PC-3 (cell line): ENCODE measurements at regions of chr21 and their contacts with region 1.

Region 1: DNA sequence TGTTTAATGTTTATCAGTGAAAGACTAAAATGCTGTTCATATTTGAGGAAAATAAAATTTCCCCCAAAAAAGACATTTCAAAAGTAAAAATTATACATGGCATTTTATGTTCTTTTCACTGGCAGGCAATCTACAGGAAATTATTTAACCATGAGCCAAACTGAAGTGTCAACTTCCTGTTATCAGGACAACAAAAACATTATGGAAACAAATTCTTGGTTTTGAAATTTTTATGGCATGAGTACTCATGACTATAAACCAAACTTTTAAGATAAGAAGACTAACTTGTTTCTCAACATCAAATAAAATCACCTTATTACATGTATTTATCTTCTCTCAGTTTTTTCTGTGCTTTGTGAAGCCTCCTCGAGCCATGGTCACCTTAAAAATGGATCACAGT is 698.6 kb downstream of the LTN1 start:
- DNase-seq: peak; percentile 88
- ATAC-seq: peak; percentile 79
- H3K4me3 ChIP-seq: no peak overlapping the region
- H3K27ac ChIP-seq: peak overlapping the region; percentile 27
- H3K4me1 ChIP-seq: peaks cover 38% of the 10 kb centered on the region
- H3K27me3 ChIP-seq: no peaks in the 10 kb centered on the region
- CTCF ChIP-seq: no peak

Region 2: GRCh38 chr21:28127175-28127785 is 166.8 kb before region 1 on chr21:
- CTCF ChIA-PET with region 1: no interaction called
- POLR2A ChIA-PET with region 1: no interaction called
- intact Hi-C with region 1: no loop called
- DNase-seq: no peak
- ATAC-seq: no peak
- H3K4me3 ChIP-seq: no peak overlapping the region
- H3K27ac ChIP-seq: no peak overlapping the region
- H3K4me1 ChIP-seq: no peaks in the 10 kb centered on the region
- H3K27me3 ChIP-seq: no peaks in the 10 kb centered on the region
- CTCF ChIP-seq: no peak

Region 3: GRCh38 chr21:28160378-28160777 is 133.7 kb before region 1 on chr21:
- CTCF ChIA-PET with region 1: no interaction called
- POLR2A ChIA-PET with region 1: no interaction called
- intact Hi-C with region 1: no loop called
- DNase-seq: no peak
- ATAC-seq: no peak
- H3K4me3 ChIP-seq: no peak overlapping the region
- H3K27ac ChIP-seq: no peak overlapping the region
- H3K4me1 ChIP-seq: peaks cover 7% of the 10 kb centered on the region; the same call in 1 of the 2 replicates
- H3K27me3 ChIP-seq: no peaks in the 10 kb centered on the region
- CTCF ChIP-seq: no peak

Region 4: GRCh38 chr21:28229814-28230213 is 64.2 kb before region 1 on chr21:
- CTCF ChIA-PET with region 1: no interaction called
- POLR2A ChIA-PET with region 1: no interaction called
- intact Hi-C with region 1: loop called (anchors 5 kb)
- DNase-seq: peak; percentile 92
- ATAC-seq: peak; percentile 85
- H3K4me3 ChIP-seq: no peak overlapping the region
- H3K27ac ChIP-seq: peak overlapping the region; percentile 81
- H3K4me1 ChIP-seq: peaks cover 43% of the 10 kb centered on the region
- H3K27me3 ChIP-seq: no peaks in the 10 kb centered on the region
- CTCF ChIP-seq: no peak

Region 5: GRCh38 chr21:28345934-28346333 is 51.9 kb after region 1 on chr21:
- CTCF ChIA-PET with region 1: no interaction called
- POLR2A ChIA-PET with region 1: no interaction called
- intact Hi-C with region 1: no loop called
- DNase-seq: no peak
- ATAC-seq: no peak
- H3K4me3 ChIP-seq: no peak overlapping the region
- H3K27ac ChIP-seq: no peak overlapping the region
- H3K4me1 ChIP-seq: no peaks in the 10 kb centered on the region
- H3K27me3 ChIP-seq: no peaks in the 10 kb centered on the region
- CTCF ChIP-seq: no peak